Mucosa of descending colon (tissue), 3 donors: ENCODE measurements at regions of chr1 and their contacts with region 1.

Region 1: GRCh38 chr1:151739590-151740375 is 18.5 kb downstream of the RIIAD1 start:
- DNase-seq: peak in 1 of 3 donors; percentile 63
- ATAC-seq: peak; percentile 78
- H3K4me3 ChIP-seq: no peak overlapping the region
- H3K4me1 ChIP-seq: no peaks in the 10 kb centered on the region
- CTCF ChIP-seq: no peak

Region 2: DNA sequence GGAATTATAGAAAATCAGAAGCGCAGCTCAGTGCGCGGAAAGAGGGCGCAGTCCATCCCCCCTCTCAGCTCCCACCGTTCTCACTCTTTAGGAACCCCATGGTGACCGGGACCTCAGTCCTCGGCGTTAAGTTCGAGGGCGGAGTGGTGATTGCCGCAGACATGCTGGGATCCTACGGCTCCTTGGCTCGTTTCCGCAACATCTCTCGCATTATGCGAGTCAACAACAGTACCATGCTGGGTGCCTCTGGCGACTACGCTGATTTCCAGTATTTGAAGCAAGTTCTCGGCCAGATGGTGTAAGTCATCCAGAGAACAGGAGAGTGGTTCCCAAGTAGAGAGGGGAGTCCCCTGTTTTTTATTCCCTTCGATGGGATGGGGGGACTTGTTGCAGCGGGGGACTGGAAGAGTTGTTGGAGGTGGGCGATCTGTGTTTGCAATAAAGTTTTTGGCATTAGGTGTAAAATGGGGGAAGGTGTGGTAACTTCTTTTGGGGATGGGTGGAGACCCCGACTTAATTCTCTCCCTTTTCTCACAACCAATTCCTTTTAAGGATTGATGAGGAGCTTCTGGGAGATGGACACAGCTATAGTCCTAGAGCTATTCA is 339.8 kb before region 1 on chr1:
- intact Hi-C with region 1: no loop called
- DNase-seq: peak in 1 of 3 donors; percentile 29
- ATAC-seq: peak; percentile 51
- H3K4me3 ChIP-seq: peak overlapping the region; percentile 86
- H3K4me1 ChIP-seq: peaks cover 20% of the 10 kb centered on the region
- CTCF ChIP-seq: no peak

Region 3: GRCh38 chr1:151539990-151540981 is 199.5 kb before region 1 on chr1 and contains the start of gene TUFT1:
- intact Hi-C with region 1: loop called in 1 of 2 experiments (anchors 10 kb)
- DNase-seq: peak; percentile 96 to 98 (median 97)
- ATAC-seq: peak; percentile 89
- H3K4me3 ChIP-seq: peak within 1 kb of the TSS; percentile 41
- H3K4me1 ChIP-seq: peaks cover 32% of the 10 kb centered on the region
- CTCF ChIP-seq: no peak
- total RNA-seq, gene TUFT1: 20.2 to 38.0 (median 27.5) TPM

Region 4: GRCh38 chr1:151594143-151594625 is 145.6 kb before region 1 on chr1:
- intact Hi-C with region 1: loop called (anchors 10 kb)
- DNase-seq: peak; percentile 87 to 95 (median 87)
- ATAC-seq: peak; percentile 99
- H3K4me3 ChIP-seq: no peak overlapping the region
- H3K4me1 ChIP-seq: peaks cover 4% of the 10 kb centered on the region
- CTCF ChIP-seq: peak; percentile 97

Region 5: GRCh38 chr1:151680812-151681211 is 59.0 kb before region 1 on chr1:
- intact Hi-C with region 1: no loop called
- DNase-seq: no peak
- ATAC-seq: no peak
- H3K4me3 ChIP-seq: no peak overlapping the region
- H3K4me1 ChIP-seq: no peaks in the 10 kb centered on the region
- CTCF ChIP-seq: no peak

Region 6: DNA sequence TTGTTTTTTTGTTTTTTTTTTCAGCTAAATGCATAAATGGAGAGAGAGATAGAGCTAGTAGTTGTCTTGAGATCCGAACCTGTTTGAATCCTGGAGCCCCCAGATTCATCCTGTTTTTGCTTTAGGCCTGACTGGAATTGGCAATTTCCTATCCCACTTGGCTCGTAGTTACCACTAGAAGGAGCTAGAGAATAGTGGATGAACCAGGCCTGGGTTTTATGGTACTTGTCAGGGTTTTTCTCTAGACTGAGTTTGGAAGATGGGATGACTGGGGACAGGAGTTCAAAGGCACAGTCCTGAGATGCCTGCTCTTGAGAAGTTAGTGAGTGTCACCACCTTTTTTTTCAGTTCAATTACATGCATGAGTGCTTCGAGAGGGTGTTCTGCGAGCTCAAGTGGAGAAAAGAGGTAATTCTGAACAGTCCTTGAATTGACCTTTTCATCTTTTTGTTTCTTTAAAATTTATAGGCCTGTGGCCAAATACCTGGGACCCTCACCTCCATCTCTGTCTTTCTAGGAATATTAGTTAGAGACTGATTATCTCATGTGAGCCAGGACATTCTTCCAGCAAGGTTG is 46.6 kb before region 1 on chr1:
- intact Hi-C with region 1: loop called in 1 of 2 experiments (anchors 5 kb)
- DNase-seq: peak in 1 of 3 donors; percentile 32
- ATAC-seq: peak; percentile 70
- H3K4me3 ChIP-seq: no peak overlapping the region
- H3K4me1 ChIP-seq: no peaks in the 10 kb centered on the region
- CTCF ChIP-seq: peak; percentile 49